ENCODE measurements at regions of chr5 and their contacts with region 1.

Region 1: DNA sequence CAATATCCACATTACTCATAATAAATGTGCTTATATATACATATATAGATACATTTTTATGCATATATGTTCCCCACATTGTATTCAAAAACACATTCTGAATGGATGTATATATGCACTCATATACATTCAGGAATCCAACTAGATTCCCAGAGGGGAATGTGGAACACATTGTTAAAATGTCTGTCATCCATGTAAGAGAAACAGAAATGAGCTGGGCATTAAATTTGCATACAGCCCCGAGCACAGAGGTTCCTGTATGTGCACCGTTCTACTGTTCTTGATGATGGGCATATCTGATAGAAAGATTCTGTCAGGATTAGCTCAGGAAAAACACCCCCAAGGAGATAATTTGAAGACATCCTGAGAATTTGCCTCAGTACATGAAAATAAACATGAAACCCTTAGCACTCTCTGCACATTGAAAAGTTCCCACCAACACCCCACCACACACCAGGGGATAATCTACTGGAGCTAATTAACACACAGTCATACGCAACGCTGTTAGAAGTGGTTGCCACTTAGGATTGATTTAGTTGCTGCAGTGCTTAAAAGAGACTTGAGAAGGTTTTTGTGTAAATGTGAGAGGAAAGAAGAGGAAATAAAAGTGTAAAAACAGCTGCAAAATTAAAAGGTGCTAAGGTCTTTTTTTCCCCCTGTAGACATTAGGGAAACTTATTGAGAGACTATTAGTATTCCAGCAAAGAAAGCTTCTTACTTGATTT is 223.3 kb downstream of the SLF1 start:
- DNase-seq: no peak
- ATAC-seq: no peak
- H3K4me3 ChIP-seq: no peak overlapping the region
- H3K27ac ChIP-seq: no peak overlapping the region
- H3K4me1 ChIP-seq: no peaks in the 10 kb centered on the region
- H3K27me3 ChIP-seq: no peaks in the 10 kb centered on the region
- CTCF ChIP-seq: no peak
- EP300 ChIP-seq: no peak
- POLR2A ChIP-seq: no peak
- RAD21 ChIP-seq: no peak

Region 2: GRCh38 chr5:94812232-94812631 is 29.5 kb before region 1 on chr5:
- CTCF ChIA-PET with region 1: interaction called, 4 read pairs
- POLR2A ChIA-PET with region 1: no interaction called
- RAD21 ChIA-PET with region 1: no interaction called
- SMC1A ChIA-PET with region 1: interaction called, 10 read pairs
- in situ Hi-C with region 1: no loop called
- intact Hi-C with region 1: no loop called
- DNase-seq: no peak
- ATAC-seq: no peak
- H3K4me3 ChIP-seq: no peak overlapping the region
- H3K27ac ChIP-seq: no peak overlapping the region
- H3K4me1 ChIP-seq: no peaks in the 10 kb centered on the region
- H3K27me3 ChIP-seq: no peaks in the 10 kb centered on the region
- CTCF ChIP-seq: no peak; a peak in 1 of 6 replicates
- EP300 ChIP-seq: no peak
- POLR2A ChIP-seq: no peak
- RAD21 ChIP-seq: no peak

Region 3: DNA sequence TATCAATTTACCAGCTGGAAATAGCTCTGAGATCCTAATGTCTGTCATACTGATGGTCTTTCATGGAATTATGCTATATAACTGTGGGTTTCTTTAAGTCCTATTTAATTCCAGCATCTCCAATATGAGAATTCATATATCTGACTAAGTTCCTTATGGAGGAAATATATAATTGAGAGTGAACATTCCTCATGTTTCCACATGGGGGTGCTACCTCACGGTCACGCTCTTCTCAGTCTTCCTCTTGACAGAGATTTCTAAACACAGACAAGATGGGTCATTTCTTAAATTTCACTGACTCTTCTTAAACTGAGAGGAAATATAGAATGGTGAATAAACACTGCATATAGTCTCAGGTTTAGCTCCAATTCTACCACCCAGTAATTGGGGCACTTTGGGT is 11.2 kb before region 1 on chr5:
- CTCF ChIA-PET with region 1: interaction called, 33 read pairs
- POLR2A ChIA-PET with region 1: interaction called, 5 read pairs
- RAD21 ChIA-PET with region 1: interaction called, 11 read pairs
- SMC1A ChIA-PET with region 1: interaction called, 28 read pairs
- in situ Hi-C with region 1: no loop called
- intact Hi-C with region 1: no loop called
- DNase-seq: no peak
- ATAC-seq: peak; percentile 68
- H3K4me3 ChIP-seq: no peak overlapping the region
- H3K27ac ChIP-seq: no peak overlapping the region
- H3K4me1 ChIP-seq: no peaks in the 10 kb centered on the region
- H3K27me3 ChIP-seq: no peaks in the 10 kb centered on the region
- CTCF ChIP-seq: peak; percentile 23 to 42 (median 32); a peak in 5 of 6 replicates
- EP300 ChIP-seq: no peak
- POLR2A ChIP-seq: no peak
- RAD21 ChIP-seq: peak; percentile 26; the same call in 1 of the 2 replicates

Measured in GM12878 (cell line).